ENCODE measurements at regions of chr22 and their contacts with region 1.

Region 1: GRCh38 chr22:22431271-22432220 is 77.0 kb downstream of the ZNF280B start:
- DNase-seq: peak; percentile 88
- ATAC-seq: peak; percentile 92
- H3K4me3 ChIP-seq: no peak overlapping the region
- H3K4me3 Mint-ChIP-seq: no peak overlapping the region
- H3K27ac ChIP-seq: peak overlapping the region; percentile 54
- H3K27ac Mint-ChIP-seq: peak overlapping the region; percentile 90
- H3K4me1 ChIP-seq: peaks cover 43 to 56% of the 10 kb centered on the region in 2 donors
- H3K4me1 Mint-ChIP-seq: peaks cover 61% of the 10 kb centered on the region
- H3K27me3 ChIP-seq: no peaks in the 10 kb centered on the region
- H3K27me3 Mint-ChIP-seq: no peaks in the 10 kb centered on the region
- CTCF ChIP-seq: peak; percentile 76

Region 2: GRCh38 chr22:22357024-22357883 is 74.3 kb before region 1 on chr22:
- CTCF ChIA-PET with region 1: interaction called, 17 read pairs
- POLR2A ChIA-PET with region 1: no interaction called
- intact Hi-C with region 1: no loop called
- DNase-seq: peak; percentile 93
- ATAC-seq: peak; percentile 90
- H3K4me3 ChIP-seq: peak overlapping the region in 3 of 5 experiments; percentile 18 to 27 (median 26)
- H3K4me3 Mint-ChIP-seq: peak overlapping the region; percentile 65
- H3K27ac ChIP-seq: peak overlapping the region; percentile 61 to 71
- H3K27ac Mint-ChIP-seq: peak overlapping the region; percentile 90
- H3K4me1 ChIP-seq: peaks cover 29 to 49% of the 10 kb centered on the region in 2 donors
- H3K4me1 Mint-ChIP-seq: peaks cover 59% of the 10 kb centered on the region
- H3K27me3 ChIP-seq: no peaks in the 10 kb centered on the region
- H3K27me3 Mint-ChIP-seq: no peaks in the 10 kb centered on the region
- CTCF ChIP-seq: peak; percentile 72

Region 3: DNA sequence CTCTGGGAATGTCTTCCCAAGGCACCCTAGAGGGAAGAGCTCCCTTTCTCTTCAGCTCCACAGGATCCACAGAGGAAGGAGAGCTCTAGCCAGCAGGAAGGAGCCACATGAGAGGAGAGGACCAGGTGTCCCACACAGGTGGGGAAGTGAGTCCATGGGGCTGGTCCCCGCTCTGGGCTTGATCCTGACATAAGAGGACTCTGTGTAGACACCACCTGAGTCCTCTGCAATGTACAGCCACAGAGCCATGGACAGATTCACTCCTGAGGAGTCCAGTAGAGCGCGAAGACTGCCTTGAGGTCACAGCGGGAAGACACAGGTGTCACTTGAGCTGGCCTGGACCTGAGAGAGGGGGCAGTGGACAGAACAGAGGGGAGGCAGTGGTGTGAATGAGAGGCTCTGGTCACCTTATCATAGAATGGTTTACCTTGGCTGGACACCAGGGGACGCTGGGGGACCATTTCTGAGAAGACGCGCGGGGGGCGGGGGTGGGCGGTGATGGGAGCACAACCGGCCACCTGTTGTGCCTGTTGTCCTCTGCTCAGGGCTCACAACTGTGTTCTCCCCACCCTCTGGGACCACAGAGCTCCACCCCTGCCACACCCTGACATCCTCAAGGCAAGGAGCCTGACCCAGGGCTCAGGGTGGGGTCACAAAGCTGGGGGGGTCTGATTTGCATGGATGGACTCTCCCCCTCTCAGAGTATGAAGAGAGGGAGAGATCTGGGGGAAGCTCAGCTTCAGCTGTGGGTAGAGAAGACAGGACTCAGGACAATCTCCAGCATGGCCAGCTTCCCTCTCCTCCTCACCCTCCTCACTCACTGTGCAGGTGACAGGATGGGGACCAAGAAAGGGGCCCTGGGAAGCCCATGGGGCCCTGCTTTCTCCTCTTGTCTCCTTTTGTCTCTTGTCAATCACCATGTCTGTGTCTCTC is 51.2 kb before region 1 on chr22:
- CTCF ChIA-PET with region 1: interaction called, 27 read pairs
- POLR2A ChIA-PET with region 1: no interaction called
- intact Hi-C with region 1: loop called (anchors 2 kb)
- DNase-seq: peak; percentile 87
- ATAC-seq: peak; percentile 88
- H3K4me3 ChIP-seq: peak overlapping the region in 1 of 5 experiments; percentile 15
- H3K4me3 Mint-ChIP-seq: peak overlapping the region; percentile 77
- H3K27ac ChIP-seq: peak overlapping the region; percentile 60 to 72
- H3K27ac Mint-ChIP-seq: peak overlapping the region; percentile 94
- H3K4me1 ChIP-seq: peaks cover 59 to 69% of the 10 kb centered on the region in 2 donors
- H3K4me1 Mint-ChIP-seq: peaks cover 79% of the 10 kb centered on the region
- H3K27me3 ChIP-seq: no peaks in the 10 kb centered on the region
- H3K27me3 Mint-ChIP-seq: no peaks in the 10 kb centered on the region
- CTCF ChIP-seq: peak; percentile 66

Region 4: DNA sequence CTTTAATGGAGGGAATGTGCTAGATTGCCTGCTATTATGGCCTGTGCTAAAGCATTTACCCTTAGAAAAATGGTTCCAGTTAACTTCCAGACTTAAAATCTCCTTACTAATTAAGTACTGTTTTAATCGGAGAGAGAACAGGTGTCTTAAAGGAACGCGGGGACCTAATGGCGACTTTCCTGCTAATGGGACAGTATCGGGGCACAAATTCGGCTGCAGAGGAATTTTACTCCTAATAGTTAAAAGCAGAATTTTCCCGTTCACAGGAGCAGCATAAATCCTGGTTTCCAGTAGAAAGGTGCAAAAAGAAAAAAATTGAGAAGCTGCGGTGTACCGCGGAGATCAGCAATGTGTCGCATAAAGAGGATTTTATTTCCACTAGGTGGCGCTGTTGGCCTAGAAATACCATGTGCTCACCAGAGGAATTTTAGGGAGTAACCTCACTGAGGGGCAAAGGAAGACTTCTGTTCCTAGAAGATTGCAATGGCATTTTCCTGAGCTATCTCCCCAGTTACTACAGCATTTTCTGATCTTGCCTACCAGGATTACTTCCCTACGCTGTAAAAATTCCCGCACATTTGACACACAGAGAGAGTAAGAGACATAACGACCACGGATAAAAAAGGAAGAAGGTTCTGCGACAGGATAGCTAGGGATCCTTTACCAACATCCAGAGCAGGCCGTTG is 32.5 kb after region 1 on chr22:
- CTCF ChIA-PET with region 1: interaction called, 58 read pairs
- POLR2A ChIA-PET with region 1: no interaction called
- intact Hi-C with region 1: loop called (anchors 1 kb)
- DNase-seq: peak; percentile 84
- ATAC-seq: peak; percentile 47
- H3K4me3 ChIP-seq: peak overlapping the region in 1 of 5 experiments; percentile 46
- H3K4me3 Mint-ChIP-seq: no peak overlapping the region
- H3K27ac ChIP-seq: no peak overlapping the region
- H3K27ac Mint-ChIP-seq: peak overlapping the region; percentile 16
- H3K4me1 ChIP-seq: peaks cover 13 to 15% of the 10 kb centered on the region in 2 donors
- H3K4me1 Mint-ChIP-seq: peaks cover 19% of the 10 kb centered on the region
- H3K27me3 ChIP-seq: no peaks in the 10 kb centered on the region
- H3K27me3 Mint-ChIP-seq: peaks cover 3% of the 10 kb centered on the region
- CTCF ChIP-seq: peak; percentile 88

Region 5: GRCh38 chr22:22576244-22576988 is 144.9 kb after region 1 on chr22:
- CTCF ChIA-PET with region 1: interaction called, 29 read pairs
- POLR2A ChIA-PET with region 1: no interaction called
- intact Hi-C with region 1: no loop called
- DNase-seq: peak; percentile 56
- ATAC-seq: peak; percentile 49
- H3K4me3 ChIP-seq: no peak overlapping the region
- H3K4me3 Mint-ChIP-seq: no peak overlapping the region
- H3K27ac ChIP-seq: no peak overlapping the region
- H3K27ac Mint-ChIP-seq: no peak overlapping the region
- H3K4me1 ChIP-seq: peaks cover 0 to 15% of the 10 kb centered on the region in 2 donors
- H3K4me1 Mint-ChIP-seq: peaks cover 10% of the 10 kb centered on the region
- H3K27me3 ChIP-seq: peaks cover 0 to 2% (median 0%) of the 10 kb centered on the region in 4 experiments
- H3K27me3 Mint-ChIP-seq: peaks cover 8% of the 10 kb centered on the region
- CTCF ChIP-seq: peak; percentile 84

Region 6: DNA sequence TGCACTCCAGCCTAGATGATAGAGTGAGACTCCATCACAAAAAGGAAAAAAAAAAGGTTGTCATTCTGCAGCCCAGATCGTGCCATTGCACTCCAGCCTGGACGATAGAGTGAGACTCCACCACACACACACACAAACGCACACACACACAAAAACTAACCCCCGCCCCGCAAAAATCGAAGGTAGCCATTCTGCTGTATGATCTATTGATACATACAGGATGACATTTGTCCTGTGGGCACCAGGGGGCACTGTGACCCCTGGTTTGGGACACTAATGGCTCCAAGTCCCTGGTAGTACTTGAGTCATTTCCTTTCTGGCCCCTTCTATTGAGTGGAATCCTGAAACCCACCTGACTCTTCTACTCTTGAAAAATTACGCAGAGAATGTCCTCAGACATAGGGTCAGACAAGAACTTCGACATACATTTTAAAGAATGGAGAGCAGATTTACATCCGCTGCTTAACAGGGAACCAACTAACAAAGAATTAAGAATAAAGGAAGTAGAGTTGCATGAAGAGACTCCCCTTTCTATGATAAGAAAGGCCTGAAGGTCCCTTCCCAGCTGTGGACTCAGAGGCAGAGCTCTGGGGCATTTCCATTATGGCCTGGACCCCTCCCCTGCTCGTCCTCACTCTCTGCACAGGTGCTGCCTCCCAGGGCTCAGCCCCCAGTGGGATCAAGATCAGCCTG is 162.6 kb after region 1 on chr22:
- CTCF ChIA-PET with region 1: interaction called, 66 read pairs
- POLR2A ChIA-PET with region 1: no interaction called
- intact Hi-C with region 1: no loop called
- DNase-seq: peak; percentile 80
- ATAC-seq: peak; percentile 74
- H3K4me3 ChIP-seq: no peak overlapping the region
- H3K4me3 Mint-ChIP-seq: no peak overlapping the region
- H3K27ac ChIP-seq: no peak overlapping the region
- H3K27ac Mint-ChIP-seq: peak overlapping the region; percentile 82
- H3K4me1 ChIP-seq: peaks cover 10 to 11% of the 10 kb centered on the region in 2 donors
- H3K4me1 Mint-ChIP-seq: peaks cover 26% of the 10 kb centered on the region
- H3K27me3 ChIP-seq: no peaks in the 10 kb centered on the region
- H3K27me3 Mint-ChIP-seq: no peaks in the 10 kb centered on the region
- CTCF ChIP-seq: peak; percentile 81